Activated CD4-positive, alpha-beta T cell treated with anti-CD3 and anti-CD28 coated beads for 36 hours (primary cell): ENCODE measurements at regions of chr4 and their contacts with region 1.

Region 1: GRCh38 chr4:122617597-122618593 is 3.0 kb downstream of the IL21 start:
- DNase-seq: no peak
- ATAC-seq: no peak
- H3K4me3 Mint-ChIP-seq: peak overlapping the region; percentile 80
- H3K27ac Mint-ChIP-seq: peak overlapping the region; percentile 87
- H3K4me1 Mint-ChIP-seq: peaks cover 62% of the 10 kb centered on the region
- H3K27me3 Mint-ChIP-seq: no peaks in the 10 kb centered on the region

Region 2: GRCh38 chr4:122584519-122584918 is 33.4 kb before region 1 on chr4:
- CTCF ChIA-PET with region 1: no interaction called
- POLR2A ChIA-PET with region 1: no interaction called
- intact Hi-C with region 1: loop called in 1 of 2 experiments (anchors 2 kb)
- DNase-seq: peak; percentile 33
- ATAC-seq: peak; percentile 93
- H3K4me3 Mint-ChIP-seq: peak overlapping the region; percentile 44
- H3K27ac Mint-ChIP-seq: peak overlapping the region; percentile 92
- H3K4me1 Mint-ChIP-seq: peaks cover 57% of the 10 kb centered on the region
- H3K27me3 Mint-ChIP-seq: no peaks in the 10 kb centered on the region

Region 3: DNA sequence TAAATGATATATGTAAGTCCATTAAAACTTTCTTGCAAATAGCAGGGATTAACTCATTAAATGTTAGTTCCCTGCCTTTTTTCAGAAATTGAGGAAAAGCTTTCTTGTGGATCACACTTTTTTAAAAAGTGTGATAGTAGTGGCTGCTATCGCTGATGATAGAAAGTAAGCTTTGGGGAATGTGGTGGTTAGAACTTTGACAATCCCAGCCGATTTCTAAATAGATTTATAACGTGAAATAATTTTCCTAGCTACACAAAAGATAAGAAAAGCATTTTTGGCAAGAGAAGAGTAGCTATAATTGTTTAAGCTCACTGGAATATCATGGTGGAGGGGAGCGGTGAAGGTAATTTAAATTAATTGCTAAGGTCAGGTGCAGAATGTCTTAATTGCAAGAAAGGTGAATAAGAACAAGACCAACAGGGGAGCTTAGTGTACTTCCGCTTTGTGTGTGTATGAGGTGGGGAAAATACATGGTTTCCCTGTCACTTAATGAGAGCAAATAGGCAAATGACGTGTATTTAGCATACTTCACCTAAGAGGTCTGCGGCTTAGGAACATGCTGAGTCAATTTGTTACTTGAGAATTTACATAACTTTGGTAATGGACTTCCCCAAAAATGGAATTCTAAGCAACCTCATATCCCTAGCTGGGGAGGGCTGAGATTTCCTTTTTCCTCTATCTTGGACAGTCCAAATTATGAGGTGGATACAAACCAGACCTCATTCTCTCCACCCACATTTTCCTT is 14.7 kb after region 1 on chr4:
- CTCF ChIA-PET with region 1: interaction called, 7 read pairs
- POLR2A ChIA-PET with region 1: interaction called, 7 read pairs
- intact Hi-C with region 1: loop called (anchors 1 to 2 kb)
- DNase-seq: no peak
- ATAC-seq: peak; percentile 81
- H3K4me3 Mint-ChIP-seq: no peak overlapping the region
- H3K27ac Mint-ChIP-seq: peak overlapping the region; percentile 21
- H3K4me1 Mint-ChIP-seq: peaks cover 45% of the 10 kb centered on the region
- H3K27me3 Mint-ChIP-seq: peaks cover 5% of the 10 kb centered on the region

Region 4: GRCh38 chr4:122658818-122659295 is 41.0 kb after region 1 on chr4:
- CTCF ChIA-PET with region 1: interaction called, 7 read pairs
- POLR2A ChIA-PET with region 1: interaction called, 3 read pairs
- intact Hi-C with region 1: loop called in 1 of 2 experiments (anchors 1 kb)
- DNase-seq: no peak
- ATAC-seq: peak; percentile 86
- H3K4me3 Mint-ChIP-seq: peak overlapping the region; percentile 42
- H3K27ac Mint-ChIP-seq: peak overlapping the region; percentile 98
- H3K4me1 Mint-ChIP-seq: peaks cover 61% of the 10 kb centered on the region
- H3K27me3 Mint-ChIP-seq: no peaks in the 10 kb centered on the region